H1 (cell line): ENCODE measurements at regions of chr11 and their contacts with region 1.

Region 1: GRCh38 chr11:46700241-46701077 is at the starts of genes ARHGAP1 and ZNF408:
- DNase-seq: peak; percentile 96 to 97
- H3K4me3 ChIP-seq: peak within 1 kb of the TSS; percentile 59 to 100 (median 96)
- H3K27ac ChIP-seq: peak within 1 kb of the TSS; percentile 98
- H3K4me1 ChIP-seq: no peaks in the 10 kb centered on the region; a peak in 4 of 7 replicates
- H3K27me3 ChIP-seq: no peaks in the 10 kb centered on the region
- CTCF ChIP-seq: no peak
- EP300 ChIP-seq: peak in 1 of 2 experiments; percentile 27; a peak in 1 of 3 replicates
- POLR2A ChIP-seq: peak in 1 of 2 experiments; percentile 77; a peak in 2 of 3 replicates
- RAD21 ChIP-seq: no peak
- total RNA-seq, gene ARHGAP1: 58.8 and 63.3 TPM in 2 replicates
- total RNA-seq, gene ZNF408: 10.7 and 11.0 TPM in 2 replicates

Region 2: GRCh38 chr11:46675288-46675851 is 25.1 kb before region 1 on chr11:
- CTCF ChIA-PET with region 1: interaction called, 5 read pairs
- POLR2A ChIA-PET with region 1: interaction called, 21 read pairs
- DNase-seq: no peak
- H3K4me3 ChIP-seq: no peak overlapping the region
- H3K27ac ChIP-seq: peak overlapping the region; percentile 9; the same call in 1 of the 2 replicates
- H3K4me1 ChIP-seq: peaks cover 3 to 19% (median 7%) of the 10 kb centered on the region in 4 experiments
- H3K27me3 ChIP-seq: no peaks in the 10 kb centered on the region
- CTCF ChIP-seq: no peak
- EP300 ChIP-seq: no peak
- POLR2A ChIP-seq: no peak
- RAD21 ChIP-seq: no peak

Region 3: DNA sequence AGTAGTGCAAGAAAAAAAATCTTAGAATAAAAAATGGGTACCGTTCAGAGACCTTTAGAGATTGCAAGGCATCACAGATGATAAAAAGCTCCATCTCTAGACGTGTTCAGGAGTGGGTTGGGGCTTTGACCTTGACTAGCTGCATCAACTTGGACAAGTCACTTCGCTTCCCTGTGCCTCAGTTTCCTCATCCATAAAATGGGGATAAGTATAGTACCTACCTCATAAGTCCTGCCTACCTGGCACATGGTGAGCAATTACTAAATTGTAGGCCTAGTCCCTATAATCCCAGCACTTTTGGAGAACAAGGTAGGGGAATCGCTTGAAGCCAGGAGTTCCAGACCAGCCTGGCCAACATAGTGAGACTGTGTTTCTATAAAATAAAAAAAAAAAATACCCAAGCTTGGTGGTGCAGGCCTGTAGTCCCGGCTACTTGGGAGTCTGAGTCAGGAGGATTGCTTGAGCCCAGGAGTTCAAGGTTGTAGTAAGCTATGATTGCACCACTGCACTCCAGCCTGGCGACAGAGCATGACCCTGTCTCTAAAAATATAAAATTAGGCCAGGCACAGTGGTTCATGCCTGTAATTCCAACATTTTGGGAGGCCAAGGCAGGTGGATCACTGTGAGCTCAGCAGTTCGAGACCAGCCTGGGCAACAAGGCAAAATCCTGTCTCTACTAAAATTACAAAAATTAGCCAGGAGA is 12.6 kb after region 1 on chr11:
- CTCF ChIA-PET with region 1: interaction called, 3 read pairs
- POLR2A ChIA-PET with region 1: interaction called, 18 read pairs
- DNase-seq: no peak
- H3K4me3 ChIP-seq: no peak overlapping the region
- H3K27ac ChIP-seq: no peak overlapping the region
- H3K4me1 ChIP-seq: 0 out of 7 replicates have a peak, but pooled peaks cover 0 to under 1% (median 0%) of the 10 kb centered on the region in 4 experiments
- H3K27me3 ChIP-seq: no peaks in the 10 kb centered on the region
- CTCF ChIP-seq: no peak
- EP300 ChIP-seq: no peak
- POLR2A ChIP-seq: no peak
- RAD21 ChIP-seq: no peak

Region 4: DNA sequence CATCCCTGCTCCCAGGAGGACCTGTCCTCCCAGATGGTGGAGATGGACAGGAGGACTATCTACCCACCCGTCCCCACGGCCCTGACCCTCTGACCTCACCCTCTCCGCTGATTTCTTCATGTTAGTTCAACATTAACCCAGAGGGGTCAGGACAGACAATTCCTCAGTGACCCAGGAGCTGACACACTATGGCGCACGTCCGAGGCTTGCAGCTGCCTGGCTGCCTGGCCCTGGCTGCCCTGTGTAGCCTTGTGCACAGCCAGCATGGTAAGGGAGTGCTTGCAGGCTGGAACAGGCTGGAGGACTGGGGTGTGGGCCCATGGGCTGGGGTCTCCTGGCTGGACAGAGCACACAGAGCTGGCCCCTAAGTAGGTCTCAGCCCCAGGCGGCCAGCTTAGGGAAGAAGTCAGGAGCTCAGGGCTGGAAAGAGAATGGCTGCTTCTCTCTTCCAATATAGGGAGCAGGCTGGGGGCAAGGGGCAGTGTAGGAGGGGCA is 18.6 kb after region 1 on chr11 and contains the start of gene F2:
- CTCF ChIA-PET with region 1: interaction called, 3 read pairs
- POLR2A ChIA-PET with region 1: interaction called, 21 read pairs
- DNase-seq: no peak
- H3K4me3 ChIP-seq: no peak within 1 kb of the TSS
- H3K27ac ChIP-seq: no peak within 1 kb of the TSS
- H3K4me1 ChIP-seq: peaks cover 0 to 5% (median 0%) of the 10 kb centered on the region in 4 experiments; a peak in 2 of 7 replicates
- H3K27me3 ChIP-seq: no peaks in the 10 kb centered on the region
- CTCF ChIP-seq: no peak
- EP300 ChIP-seq: no peak
- POLR2A ChIP-seq: no peak
- RAD21 ChIP-seq: no peak
- total RNA-seq, gene F2: not detected in 2 replicates